Heart right ventricle (tissue), 16 donors: ENCODE measurements at regions of chr10 and their contacts with region 1.

Region 1: DNA sequence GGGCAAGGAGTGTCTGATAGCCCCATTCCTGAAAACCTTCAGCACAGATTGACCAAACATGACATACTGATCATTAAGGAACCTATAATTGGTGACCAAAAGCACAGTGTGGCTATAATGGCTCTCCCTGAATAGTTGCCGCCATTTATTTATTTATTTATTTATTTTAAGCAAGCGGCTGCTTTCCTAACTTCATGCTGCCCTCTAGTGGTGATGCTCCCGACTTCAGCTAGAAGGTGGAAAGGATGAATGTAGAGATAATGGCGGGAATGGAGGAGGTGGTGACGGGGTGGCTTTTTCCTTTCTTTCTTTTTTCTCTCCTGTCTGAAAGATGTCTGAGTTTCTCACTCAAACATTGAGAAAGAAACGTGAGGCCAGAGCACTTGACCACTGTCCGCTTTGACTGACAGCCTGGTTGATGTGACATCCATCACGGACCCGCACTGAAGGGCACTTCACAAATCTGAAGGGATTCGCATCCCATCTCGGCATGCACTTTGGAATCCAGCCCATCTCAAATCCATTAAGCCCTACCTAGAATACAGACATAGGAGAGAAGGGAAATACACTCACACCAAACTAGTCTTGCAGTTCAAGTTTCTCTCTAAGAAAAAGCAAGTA is 1090.1 kb downstream of the KCNMA1 start:
- DNase-seq: peak; percentile 56 to 89
- ATAC-seq: peak; percentile 56 to 78 (median 72)
- H3K4me3 ChIP-seq: peak overlapping the region in 1 of 10 donors; percentile 12
- H3K27ac ChIP-seq: no peak overlapping the region
- H3K4me1 ChIP-seq: peaks cover 0 to 15% (median 0%) of the 10 kb centered on the region in 9 donors
- H3K27me3 ChIP-seq: no peaks in the 10 kb centered on the region
- CTCF ChIP-seq: peak; percentile 72 to 91 (median 83)

Region 2: GRCh38 chr10:76049581-76050290 is 497.7 kb before region 1 on chr10:
- intact Hi-C with region 1: loop called in 2 of 10 experiments (anchors 10 kb)
- DNase-seq: no peak
- ATAC-seq: peak in 5 of 8 donors; percentile 23 to 70 (median 31)
- H3K4me3 ChIP-seq: no peak overlapping the region
- H3K27ac ChIP-seq: no peak overlapping the region
- H3K4me1 ChIP-seq: peaks cover 0 to 8% (median 0%) of the 10 kb centered on the region in 9 donors
- H3K27me3 ChIP-seq: no peaks in the 10 kb centered on the region
- CTCF ChIP-seq: no peak

Region 3: DNA sequence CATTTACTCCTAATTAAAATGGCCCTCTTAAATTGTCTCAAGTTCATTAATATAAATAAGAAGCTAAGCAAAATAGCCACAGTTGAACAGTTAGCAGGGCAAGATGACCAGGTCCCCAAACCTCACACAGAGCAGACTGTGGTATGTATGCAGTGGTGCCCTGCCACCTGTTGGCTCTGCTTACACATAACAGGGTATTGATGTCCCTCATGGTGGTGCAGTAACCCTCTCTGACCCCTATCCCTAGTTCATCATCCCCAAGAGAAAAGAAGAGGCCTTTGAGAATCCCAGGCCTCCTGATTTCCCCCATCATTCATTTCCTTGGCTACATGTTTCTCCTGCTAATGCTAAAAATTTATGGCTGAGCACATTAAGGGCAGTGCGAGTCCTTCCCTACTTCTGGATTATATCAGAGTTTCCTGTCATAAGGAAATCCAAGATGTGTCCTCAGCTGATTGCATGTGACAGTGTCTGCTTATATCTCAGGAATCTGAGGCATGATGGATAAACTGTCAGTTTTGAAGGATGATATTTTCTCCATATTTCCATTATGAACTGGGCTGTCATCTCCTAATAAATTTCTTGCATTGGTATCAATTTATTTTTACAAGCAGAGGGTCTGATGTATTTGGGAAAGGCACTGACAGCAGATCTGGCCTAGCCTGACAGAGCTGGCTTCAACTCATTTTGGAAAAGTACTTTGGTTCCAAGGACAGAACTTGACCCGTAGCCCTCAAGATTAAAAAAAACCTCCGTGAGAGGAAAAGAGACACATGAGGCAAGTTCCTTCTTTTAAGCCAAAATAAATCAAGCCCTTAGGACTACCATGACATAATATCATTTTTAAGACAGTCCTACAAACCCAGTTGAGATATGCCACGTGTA is 235.5 kb before region 1 on chr10:
- intact Hi-C with region 1: loop called in 6 of 10 experiments (anchors 2 to 10 kb)
- DNase-seq: peak in 1 of 2 donors; percentile 27
- ATAC-seq: peak; percentile 64 to 85 (median 78)
- H3K4me3 ChIP-seq: no peak overlapping the region
- H3K27ac ChIP-seq: peak overlapping the region in 7 of 10 donors; percentile 7 to 68 (median 53)
- H3K4me1 ChIP-seq: peaks cover 0 to 47% (median 39%) of the 10 kb centered on the region in 9 donors
- H3K27me3 ChIP-seq: no peaks in the 10 kb centered on the region
- CTCF ChIP-seq: peak in 8 of 9 donors; percentile 21 to 47 (median 37)

Region 4: DNA sequence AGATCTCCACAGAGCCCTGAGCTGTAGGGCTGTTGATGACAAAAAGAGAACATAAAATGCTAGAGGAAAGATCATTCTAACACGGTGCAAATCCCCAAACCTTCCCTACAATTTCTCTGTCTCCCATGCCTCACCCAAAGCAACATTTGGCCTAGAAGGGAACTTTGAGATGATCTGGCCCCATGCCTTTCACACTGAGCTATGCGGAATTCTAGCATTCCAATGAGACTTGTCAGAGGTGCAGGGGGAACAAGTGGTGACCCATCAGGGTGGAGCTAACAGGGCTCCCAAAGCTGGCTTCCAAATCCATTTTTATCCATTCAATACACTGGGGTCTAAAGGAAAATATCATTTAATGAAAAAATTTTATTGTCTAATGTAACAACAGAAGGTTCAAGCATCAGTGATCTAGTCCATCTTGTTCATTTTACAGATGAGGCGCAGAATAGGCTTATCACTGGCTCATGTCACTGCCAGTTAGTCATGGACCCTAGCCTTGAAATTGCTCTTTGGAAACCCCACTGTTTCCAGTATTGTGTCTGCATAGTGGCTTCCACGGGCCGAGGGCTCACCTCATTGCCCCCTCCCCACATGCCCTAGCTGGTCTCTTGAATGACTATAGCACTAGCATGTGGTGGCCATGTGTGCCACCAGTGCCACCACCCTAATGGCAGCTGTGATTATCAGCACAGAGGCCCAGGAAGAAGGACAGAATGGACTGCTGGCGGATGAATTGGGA is 115.0 kb before region 1 on chr10:
- intact Hi-C with region 1: loop called in 1 of 10 experiments (anchors 5 kb)
- DNase-seq: peak; percentile 14 to 48
- ATAC-seq: peak in 7 of 8 donors; percentile 28 to 71 (median 47)
- H3K4me3 ChIP-seq: no peak overlapping the region
- H3K27ac ChIP-seq: peak overlapping the region; percentile 46 to 89 (median 82)
- H3K4me1 ChIP-seq: peaks cover 22 to 85% (median 67%) of the 10 kb centered on the region in 9 donors
- H3K27me3 ChIP-seq: no peaks in the 10 kb centered on the region
- CTCF ChIP-seq: no peak

Region 5: DNA sequence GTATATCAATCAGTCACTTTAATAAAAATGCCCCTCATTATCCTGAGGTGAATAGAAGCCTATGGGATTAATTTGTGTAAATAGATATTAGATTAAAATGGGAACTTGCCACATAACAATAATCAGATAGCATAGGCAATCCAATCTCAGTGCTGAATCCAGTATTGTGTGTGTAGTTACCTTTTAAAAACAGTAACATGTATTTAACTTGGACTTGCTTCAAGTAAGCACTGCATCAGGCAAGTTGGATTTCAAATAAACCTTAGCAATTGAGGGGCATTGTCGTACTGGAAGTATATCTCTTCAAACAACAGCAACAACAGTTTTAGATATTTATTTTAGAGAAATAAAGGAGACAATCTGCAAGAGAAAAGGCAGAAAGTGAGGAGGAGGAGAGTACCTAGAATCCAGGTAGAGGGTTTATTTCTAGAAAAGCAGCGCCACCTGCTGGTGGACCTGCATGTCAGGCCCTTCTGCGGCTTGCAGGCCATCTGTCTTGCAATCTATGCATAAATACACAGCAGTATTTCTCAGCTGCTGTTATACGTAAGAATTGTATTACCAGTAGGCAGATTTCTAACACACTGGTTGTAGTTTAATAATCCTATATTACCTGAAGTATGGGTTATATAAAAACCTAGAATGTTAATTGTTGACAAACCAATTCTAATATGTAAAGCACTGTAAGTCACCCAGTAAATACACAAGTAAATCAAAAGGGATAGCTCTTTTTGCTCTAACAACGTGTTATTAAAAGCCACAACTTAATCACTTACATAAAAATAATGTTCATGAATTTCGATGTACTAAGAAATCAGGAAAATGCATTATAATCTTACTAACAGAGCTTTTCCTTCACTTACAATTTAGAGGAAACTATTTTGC is 437.3 kb after region 1 on chr10:
- intact Hi-C with region 1: loop called in 5 of 10 experiments (anchors 5 to 10 kb)
- DNase-seq: peak; percentile 47 to 58
- ATAC-seq: peak in 6 of 8 donors; percentile 57 to 87 (median 72)
- H3K4me3 ChIP-seq: no peak overlapping the region
- H3K27ac ChIP-seq: no peak overlapping the region
- H3K4me1 ChIP-seq: no peaks in the 10 kb centered on the region
- H3K27me3 ChIP-seq: peaks cover 0 to 8% (median 0%) of the 10 kb centered on the region in 7 donors
- CTCF ChIP-seq: peak; percentile 65 to 97 (median 95)